ENCODE measurements at regions of chr1 and their contacts with region 1.

Region 1: GRCh38 chr1:113928941-113929749 is at the start of gene HIPK1:
- DNase-seq: peak; percentile 82
- ATAC-seq: peak; percentile 90
- H3K4me3 ChIP-seq: peak within 1 kb of the TSS; percentile 96
- H3K27ac ChIP-seq: peak within 1 kb of the TSS; percentile 97
- H3K4me1 ChIP-seq: no peaks in the 10 kb centered on the region
- H3K27me3 ChIP-seq: no peaks in the 10 kb centered on the region
- CTCF ChIP-seq: no peak
- POLR2A ChIP-seq: peak; percentile 77
- RAD21 ChIP-seq: no peak
- total RNA-seq, gene HIPK1: 25.3 and 33.9 TPM in 2 replicates

Region 2: GRCh38 chr1:113140588-113141446 is 788.3 kb before region 1 on chr1:
- CTCF ChIA-PET with region 1: no interaction called
- POLR2A ChIA-PET with region 1: no interaction called
- dilution Hi-C with region 1: no loop called
- in situ Hi-C with region 1: loop called (anchors 25 kb)
- intact Hi-C with region 1: loop called (anchors 10 kb)
- DNase-seq: peak; percentile 65
- ATAC-seq: peak; percentile 84
- H3K4me3 ChIP-seq: no peak overlapping the region
- H3K27ac ChIP-seq: no peak overlapping the region
- H3K4me1 ChIP-seq: peaks cover 5% of the 10 kb centered on the region
- H3K27me3 ChIP-seq: no peaks in the 10 kb centered on the region
- CTCF ChIP-seq: peak; percentile 87
- POLR2A ChIP-seq: no peak
- RAD21 ChIP-seq: peak; percentile 92

Region 3: GRCh38 chr1:113860891-113861290 is 68.3 kb before region 1 on chr1:
- CTCF ChIA-PET with region 1: no interaction called
- POLR2A ChIA-PET with region 1: no interaction called
- dilution Hi-C with region 1: no loop called
- in situ Hi-C with region 1: no loop called
- intact Hi-C with region 1: no loop called
- DNase-seq: peak; percentile 80
- ATAC-seq: peak; percentile 90
- H3K4me3 ChIP-seq: no peak overlapping the region; the same call in 1 of the 2 replicates
- H3K27ac ChIP-seq: peak overlapping the region; percentile 94
- H3K4me1 ChIP-seq: peaks cover 10% of the 10 kb centered on the region
- H3K27me3 ChIP-seq: no peaks in the 10 kb centered on the region
- CTCF ChIP-seq: no peak
- POLR2A ChIP-seq: no peak
- RAD21 ChIP-seq: no peak

Region 4: GRCh38 chr1:113912594-113913311 is 16.4 kb before region 1 on chr1:
- CTCF ChIA-PET with region 1: no interaction called
- POLR2A ChIA-PET with region 1: interaction called, 3 read pairs
- dilution Hi-C with region 1: no loop called
- in situ Hi-C with region 1: no loop called
- intact Hi-C with region 1: loop called (anchors 2 kb)
- DNase-seq: peak; percentile 88
- ATAC-seq: peak; percentile 97
- H3K4me3 ChIP-seq: no peak overlapping the region
- H3K27ac ChIP-seq: peak overlapping the region; percentile 83; the same call in 1 of the 2 replicates
- H3K4me1 ChIP-seq: peaks cover 7% of the 10 kb centered on the region
- H3K27me3 ChIP-seq: no peaks in the 10 kb centered on the region
- CTCF ChIP-seq: no peak
- POLR2A ChIP-seq: no peak
- RAD21 ChIP-seq: no peak

Region 5: DNA sequence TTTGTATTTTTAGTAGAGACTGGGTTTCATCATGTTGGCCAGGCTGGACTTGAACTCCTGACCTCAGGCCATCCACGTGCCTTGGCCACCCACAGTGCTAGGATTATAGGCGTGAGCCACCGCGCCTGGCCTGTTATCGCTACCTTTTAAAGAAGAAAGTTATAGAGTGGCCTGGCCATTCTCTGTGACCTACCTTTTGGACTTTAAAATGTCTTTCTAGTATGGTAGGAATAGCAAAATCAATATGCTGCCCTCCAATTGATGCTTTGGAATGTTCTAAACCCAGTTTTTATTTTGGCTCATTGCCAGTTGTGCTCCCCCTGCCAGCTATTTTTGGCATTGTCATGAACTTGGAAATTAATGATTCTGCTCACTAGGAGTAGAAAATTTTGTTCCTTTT is 19.9 kb after region 1 on chr1:
- CTCF ChIA-PET with region 1: no interaction called
- POLR2A ChIA-PET with region 1: interaction called, 14 read pairs
- dilution Hi-C with region 1: no loop called
- in situ Hi-C with region 1: no loop called
- intact Hi-C with region 1: no loop called
- DNase-seq: no peak
- ATAC-seq: no peak
- H3K4me3 ChIP-seq: no peak overlapping the region
- H3K27ac ChIP-seq: no peak overlapping the region
- H3K4me1 ChIP-seq: peaks cover 7% of the 10 kb centered on the region
- H3K27me3 ChIP-seq: no peaks in the 10 kb centered on the region
- CTCF ChIP-seq: peak; percentile 40
- POLR2A ChIP-seq: no peak
- RAD21 ChIP-seq: peak; percentile 22; the same call in 1 of the 2 replicates